ENCODE measurements at regions of chr7 and their contacts with region 1.

Region 1: DNA sequence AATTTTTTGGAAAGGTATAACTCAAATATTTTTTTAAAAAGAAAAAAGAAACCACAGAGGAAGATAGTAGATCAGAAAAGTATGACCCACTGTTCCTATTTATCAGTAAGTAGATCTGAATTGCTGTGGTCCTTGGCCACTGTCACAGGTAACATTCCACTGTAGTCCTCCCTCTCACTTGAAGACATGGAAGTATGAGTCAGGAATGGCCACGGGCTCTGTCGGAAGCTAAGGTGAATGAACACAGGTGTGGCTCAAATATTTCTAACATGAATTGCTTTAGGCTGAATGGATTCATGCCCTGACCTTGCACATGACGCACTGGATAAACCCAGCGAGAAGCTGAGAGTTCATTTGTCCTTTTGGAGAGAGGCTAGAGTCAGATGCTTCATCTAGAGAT is 224.4 kb upstream of the SP8 start:
- DNase-seq: peak; percentile 98
- H3K4me3 ChIP-seq: no peak overlapping the region
- H3K27ac ChIP-seq: peak overlapping the region; percentile 95
- H3K4me1 ChIP-seq: peaks cover 34% of the 10 kb centered on the region
- H3K27me3 ChIP-seq: no peaks in the 10 kb centered on the region
- CTCF ChIP-seq: no peak

Region 2: DNA sequence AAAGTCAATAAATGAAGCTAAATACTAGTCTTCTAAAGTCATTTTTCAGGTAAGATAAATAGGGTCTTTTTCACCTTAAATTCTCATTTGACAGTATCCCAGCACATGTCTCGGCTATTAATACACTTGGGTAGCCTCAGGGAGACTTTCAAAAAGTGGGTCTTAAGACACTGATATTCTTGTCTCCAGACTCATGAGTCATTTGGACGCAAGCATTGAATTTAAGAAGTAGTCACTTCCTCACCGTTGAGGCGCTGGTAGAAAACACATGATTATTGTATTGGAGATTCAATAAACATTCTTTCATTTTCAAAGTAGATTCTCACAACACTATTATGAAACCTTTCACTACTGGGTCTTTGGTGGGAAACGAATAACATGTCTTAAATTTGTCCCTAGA is 115.6 kb before region 1 on chr7:
- CTCF ChIA-PET with region 1: no interaction called
- dilution Hi-C with region 1: no loop called
- in situ Hi-C with region 1: no loop called
- intact Hi-C with region 1: loop called (anchors 5 kb)
- DNase-seq: peak; percentile 91
- H3K4me3 ChIP-seq: no peak overlapping the region
- H3K27ac ChIP-seq: peak overlapping the region; percentile 92
- H3K4me1 ChIP-seq: peaks cover 29% of the 10 kb centered on the region
- H3K27me3 ChIP-seq: no peaks in the 10 kb centered on the region
- CTCF ChIP-seq: no peak

Region 3: DNA sequence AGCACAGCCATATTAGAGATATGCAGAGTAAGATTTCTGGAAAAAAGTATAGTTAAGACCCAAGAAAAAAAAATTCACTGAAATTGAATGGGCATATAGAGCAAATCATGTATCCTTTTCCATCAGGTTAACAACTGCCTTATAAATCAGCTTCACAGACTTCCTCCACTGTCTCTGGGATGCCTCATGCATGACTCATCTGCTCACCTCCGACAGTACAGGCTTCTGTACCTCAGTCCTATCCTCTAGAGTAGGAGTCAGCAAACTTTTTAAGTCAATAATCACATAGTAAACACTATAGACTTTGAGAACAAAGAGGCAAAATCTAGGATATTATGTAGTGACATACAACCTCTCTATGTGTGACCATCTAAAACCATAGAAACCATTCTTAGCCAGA is 12.8 kb before region 1 on chr7:
- CTCF ChIA-PET with region 1: no interaction called
- dilution Hi-C with region 1: no loop called
- in situ Hi-C with region 1: no loop called
- intact Hi-C with region 1: loop called (anchors 1 kb)
- DNase-seq: peak; percentile 78
- H3K4me3 ChIP-seq: no peak overlapping the region
- H3K27ac ChIP-seq: no peak overlapping the region
- H3K4me1 ChIP-seq: peaks cover 20% of the 10 kb centered on the region
- H3K27me3 ChIP-seq: no peaks in the 10 kb centered on the region
- CTCF ChIP-seq: no peak

Region 4: GRCh38 chr7:21086688-21087087 is 75.6 kb after region 1 on chr7:
- CTCF ChIA-PET with region 1: no interaction called
- dilution Hi-C with region 1: no loop called
- in situ Hi-C with region 1: no loop called
- intact Hi-C with region 1: loop called (anchors 5 kb)
- DNase-seq: peak; percentile 90
- H3K4me3 ChIP-seq: no peak overlapping the region
- H3K27ac ChIP-seq: no peak overlapping the region
- H3K4me1 ChIP-seq: peaks cover 20% of the 10 kb centered on the region
- H3K27me3 ChIP-seq: no peaks in the 10 kb centered on the region
- CTCF ChIP-seq: no peak

Region 5: DNA sequence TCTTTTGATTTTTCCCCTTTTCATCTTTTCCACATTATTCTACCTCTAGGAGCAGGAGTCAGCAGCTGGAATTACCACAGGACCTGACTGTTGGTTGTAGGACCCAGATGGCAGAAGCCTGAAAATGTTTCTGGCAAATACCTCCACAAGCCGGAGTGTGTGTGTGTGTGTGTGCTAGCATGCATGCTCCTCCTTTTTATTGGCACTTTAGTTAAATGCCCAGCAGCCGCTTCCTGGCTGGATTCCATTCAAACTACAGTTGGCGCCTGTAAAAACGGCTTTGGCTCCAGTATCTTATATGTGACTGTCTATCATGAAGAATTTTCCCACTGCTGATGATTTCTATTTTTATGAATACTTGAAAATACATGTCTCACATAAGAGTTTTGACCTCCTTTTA is 97.1 kb after region 1 on chr7:
- CTCF ChIA-PET with region 1: no interaction called
- dilution Hi-C with region 1: no loop called
- in situ Hi-C with region 1: loop called in 1 of 2 experiments (anchors 10 kb)
- intact Hi-C with region 1: loop called (anchors 1 kb)
- DNase-seq: no peak
- H3K4me3 ChIP-seq: no peak overlapping the region
- H3K27ac ChIP-seq: no peak overlapping the region
- H3K4me1 ChIP-seq: peaks cover 29% of the 10 kb centered on the region
- H3K27me3 ChIP-seq: no peaks in the 10 kb centered on the region
- CTCF ChIP-seq: no peak

Region 6: GRCh38 chr7:21427182-21427870 is 416.2 kb after region 1 on chr7:
- CTCF ChIA-PET with region 1: no interaction called
- dilution Hi-C with region 1: no loop called
- in situ Hi-C with region 1: no loop called
- intact Hi-C with region 1: loop called (anchors 5 kb)
- DNase-seq: peak; percentile 99
- H3K4me3 ChIP-seq: peak overlapping the region; percentile 67 to 99 (median 69)
- H3K27ac ChIP-seq: peak overlapping the region; percentile 96
- H3K4me1 ChIP-seq: peaks cover 9% of the 10 kb centered on the region
- H3K27me3 ChIP-seq: no peaks in the 10 kb centered on the region
- CTCF ChIP-seq: no peak

Measured in mammary epithelial cell (primary cell).